ENCODE measurements at regions of chr4 and their contacts with region 1.

Region 1: GRCh38 chr4:15882675-15883086 is 55.9 kb downstream of the FGFBP1 start:
- DNase-seq: peak; percentile 66
- CTCF ChIP-seq: peak; percentile 85

Region 2: DNA sequence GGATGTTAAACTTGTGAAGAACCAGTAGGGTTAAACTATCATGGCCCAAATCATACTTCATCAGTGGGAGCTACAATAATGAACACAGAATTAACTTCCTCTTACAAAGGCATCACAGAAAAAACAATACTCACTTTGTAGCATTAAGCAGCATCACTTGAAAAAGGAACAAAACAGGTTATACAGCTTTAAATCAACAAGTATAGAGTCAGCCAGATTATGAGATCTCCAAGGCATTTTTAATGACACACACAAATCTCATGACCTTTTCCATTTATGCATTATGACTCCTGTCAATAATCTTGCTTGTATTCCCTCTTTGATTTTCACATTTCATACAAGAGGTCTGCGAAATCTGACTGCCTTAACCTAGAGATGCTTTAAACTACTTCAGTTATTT is 245.8 kb before region 1 on chr4:
- CTCF ChIA-PET with region 1: no interaction called
- POLR2A ChIA-PET with region 1: no interaction called
- DNase-seq: no peak
- CTCF ChIP-seq: no peak

Region 3: GRCh38 chr4:15848191-15848842 is 34.4 kb before region 1 on chr4:
- CTCF ChIA-PET with region 1: interaction called, 19 read pairs
- POLR2A ChIA-PET with region 1: no interaction called
- DNase-seq: no peak
- CTCF ChIP-seq: no peak

Region 4: GRCh38 chr4:15868806-15869410 is 13.8 kb before region 1 on chr4:
- CTCF ChIA-PET with region 1: interaction called, 39 read pairs
- POLR2A ChIA-PET with region 1: no interaction called
- DNase-seq: no peak
- CTCF ChIP-seq: no peak

Region 5: DNA sequence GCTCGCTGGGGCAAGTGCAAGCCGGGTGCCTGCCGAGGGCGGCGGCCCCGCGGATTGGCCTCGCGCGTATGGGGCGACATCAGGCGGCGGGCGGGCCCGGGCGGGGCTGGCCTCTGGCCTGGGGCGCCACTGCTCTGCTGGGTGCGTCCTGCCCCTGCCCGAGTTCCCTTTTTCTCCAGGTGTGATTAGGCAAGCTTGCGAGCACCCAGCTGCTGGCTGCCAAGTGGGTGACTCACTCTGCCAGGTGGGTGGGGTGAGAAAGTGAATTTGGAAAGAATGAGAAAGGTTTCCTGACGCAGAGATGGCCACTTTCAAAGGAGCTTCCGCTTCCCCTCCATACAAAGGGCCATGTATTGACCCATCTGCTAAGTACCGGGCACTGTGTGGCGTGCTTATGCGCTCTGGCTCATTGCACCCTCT is 23.4 kb after region 1 on chr4:
- CTCF ChIA-PET with region 1: interaction called, 30 read pairs
- POLR2A ChIA-PET with region 1: no interaction called
- DNase-seq: no peak
- CTCF ChIP-seq: no peak

Region 6: DNA sequence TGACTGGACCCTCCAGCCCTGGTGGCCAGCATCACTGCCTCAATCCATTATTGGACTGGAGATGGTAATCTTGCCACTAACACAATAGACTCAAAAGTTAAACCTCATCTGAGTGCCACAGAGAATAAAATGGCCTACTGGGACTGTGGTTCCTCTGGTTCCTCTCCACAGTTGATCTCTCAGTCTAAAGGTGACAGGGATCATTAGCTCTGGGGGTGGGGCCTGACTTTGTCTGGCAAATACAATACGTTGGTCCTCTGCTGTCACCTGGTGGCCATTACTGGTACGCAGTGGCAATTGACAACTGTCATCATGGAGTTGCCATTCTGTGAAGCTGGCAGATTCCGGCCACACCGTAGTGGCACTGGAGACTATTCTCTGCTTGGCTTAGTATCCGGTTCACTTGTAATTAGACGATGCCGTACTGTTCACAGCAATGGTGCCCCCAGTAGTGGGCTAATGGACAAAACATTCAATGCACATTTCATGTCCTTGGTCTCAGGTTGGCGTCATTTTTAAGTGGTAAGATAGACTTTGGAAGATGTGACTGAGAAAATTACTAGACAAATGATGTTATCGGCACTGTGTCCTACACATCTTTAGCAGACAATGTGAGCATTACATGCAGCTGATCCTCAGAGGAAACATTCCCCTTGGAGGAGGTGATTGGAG is 73.6 kb after region 1 on chr4:
- CTCF ChIA-PET with region 1: interaction called, 82 read pairs
- POLR2A ChIA-PET with region 1: no interaction called
- DNase-seq: peak; percentile 77
- CTCF ChIP-seq: peak; percentile 81

Region 7: GRCh38 chr4:16006791-16007446 is 124.2 kb after region 1 on chr4:
- CTCF ChIA-PET with region 1: interaction called, 36 read pairs
- POLR2A ChIA-PET with region 1: no interaction called
- DNase-seq: no peak
- CTCF ChIP-seq: no peak

Region 8: GRCh38 chr4:16123356-16124084 is 240.8 kb after region 1 on chr4:
- CTCF ChIA-PET with region 1: no interaction called
- POLR2A ChIA-PET with region 1: no interaction called
- DNase-seq: no peak
- CTCF ChIP-seq: no peak

Measured in GM10248 (cell line).